ENCODE measurements at regions of chr10 and their contacts with region 1.

Region 1: DNA sequence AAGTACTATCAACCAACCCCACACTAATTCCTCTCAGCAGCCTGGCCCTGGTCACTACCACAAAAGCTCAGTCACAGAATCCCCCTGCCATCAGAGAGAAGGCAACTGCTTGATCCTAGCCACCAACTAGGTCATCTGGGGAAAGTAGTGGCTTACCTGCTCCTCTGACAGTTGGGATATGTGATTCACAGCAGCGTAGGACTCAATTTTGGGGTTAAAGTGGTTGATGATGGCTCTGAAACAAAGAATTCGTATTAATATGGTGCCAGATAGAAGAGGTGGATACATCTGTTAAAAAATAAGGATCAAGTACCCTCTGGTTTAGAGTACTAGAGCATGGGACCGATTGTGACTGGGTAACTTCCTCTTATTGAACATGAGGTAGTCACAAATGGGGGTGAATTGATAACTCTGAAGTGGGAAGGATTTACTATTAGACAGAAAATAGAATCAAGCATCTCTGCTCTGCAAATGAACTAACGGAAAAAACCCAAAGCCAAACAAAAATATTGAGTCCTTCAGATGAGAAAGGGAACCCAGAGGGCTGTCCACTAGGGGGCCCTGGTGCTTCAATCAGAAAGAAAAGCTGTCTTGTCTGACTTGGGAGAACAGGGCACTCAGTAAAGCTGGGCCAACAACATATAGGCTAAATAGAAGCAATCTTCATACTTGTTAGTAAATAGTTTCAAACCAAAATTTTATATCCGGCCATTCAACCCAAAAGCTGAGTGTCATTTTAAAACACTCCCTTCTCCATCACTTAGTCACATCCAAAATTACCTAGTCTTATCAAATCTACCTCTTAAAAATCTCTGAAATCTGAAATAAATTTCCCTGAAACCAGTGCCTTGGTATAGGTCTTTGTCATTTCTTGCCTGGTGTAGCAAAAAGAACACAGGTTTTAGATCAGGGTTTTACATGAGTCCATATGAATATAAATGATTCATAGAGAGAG is 45.9 kb upstream of the KCNIP2 start:
- DNase-seq: peak; percentile 43 to 85
- H3K4me3 ChIP-seq: no peak overlapping the region
- H3K27ac ChIP-seq: no peak overlapping the region
- H3K4me1 ChIP-seq: no peaks in the 10 kb centered on the region
- H3K27me3 ChIP-seq: no peaks in the 10 kb centered on the region
- CTCF ChIP-seq: peak; percentile 26 to 90 (median 81)
- EP300 ChIP-seq: no peak
- POLR2A ChIP-seq: no peak
- RAD21 ChIP-seq: peak; percentile 86 to 94

Region 2: DNA sequence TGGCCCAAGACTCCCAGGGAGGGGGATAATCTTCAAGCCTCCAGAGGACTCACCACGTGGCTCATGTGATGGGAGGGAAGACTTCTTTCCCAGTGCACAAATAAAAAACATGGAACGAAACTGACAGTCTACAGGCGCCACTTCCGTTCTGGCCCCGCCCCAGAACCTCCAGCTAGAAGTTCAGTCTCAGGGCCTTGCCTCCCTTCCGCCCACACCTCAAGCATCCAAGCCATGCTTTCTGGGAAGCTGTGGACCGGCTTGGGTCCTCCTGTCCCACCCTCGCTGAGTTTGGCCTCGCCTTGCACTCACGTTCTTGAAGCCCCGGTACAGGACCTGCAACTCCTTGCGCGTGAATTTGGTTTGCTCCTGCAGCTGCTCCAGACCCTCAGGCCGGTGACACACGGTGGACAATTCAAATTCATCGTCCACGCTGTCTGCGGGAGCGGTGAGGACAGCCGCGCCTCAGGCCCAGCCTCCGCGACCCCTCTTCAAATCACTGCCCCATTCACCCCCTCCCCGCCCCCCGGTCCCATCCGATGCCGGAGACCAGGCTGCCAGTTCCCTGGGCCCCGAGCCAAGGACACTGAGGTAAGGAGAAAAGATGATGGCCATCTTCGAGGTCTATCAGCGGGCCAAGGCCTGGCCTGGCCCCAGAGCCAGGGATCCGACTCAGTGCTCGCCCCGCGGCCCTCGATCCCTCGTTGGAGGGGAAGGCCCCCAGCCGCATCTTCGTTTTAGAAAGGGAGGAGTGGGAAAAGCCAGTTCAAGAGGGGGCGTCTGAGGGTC is 60.6 kb before region 1 on chr10:
- CTCF ChIA-PET with region 1: no interaction called
- POLR2A ChIA-PET with region 1: no interaction called
- DNase-seq: no peak
- H3K4me3 ChIP-seq: peak overlapping the region in 3 of 4 experiments; percentile 30 to 55 (median 36); a peak in 5 of 8 replicates
- H3K27ac ChIP-seq: no peak overlapping the region
- H3K4me1 ChIP-seq: peaks cover 7 to 21% (median 15%) of the 10 kb centered on the region in 4 experiments
- H3K27me3 ChIP-seq: no peaks in the 10 kb centered on the region
- CTCF ChIP-seq: no peak
- EP300 ChIP-seq: no peak
- POLR2A ChIP-seq: no peak
- RAD21 ChIP-seq: no peak

Region 3: DNA sequence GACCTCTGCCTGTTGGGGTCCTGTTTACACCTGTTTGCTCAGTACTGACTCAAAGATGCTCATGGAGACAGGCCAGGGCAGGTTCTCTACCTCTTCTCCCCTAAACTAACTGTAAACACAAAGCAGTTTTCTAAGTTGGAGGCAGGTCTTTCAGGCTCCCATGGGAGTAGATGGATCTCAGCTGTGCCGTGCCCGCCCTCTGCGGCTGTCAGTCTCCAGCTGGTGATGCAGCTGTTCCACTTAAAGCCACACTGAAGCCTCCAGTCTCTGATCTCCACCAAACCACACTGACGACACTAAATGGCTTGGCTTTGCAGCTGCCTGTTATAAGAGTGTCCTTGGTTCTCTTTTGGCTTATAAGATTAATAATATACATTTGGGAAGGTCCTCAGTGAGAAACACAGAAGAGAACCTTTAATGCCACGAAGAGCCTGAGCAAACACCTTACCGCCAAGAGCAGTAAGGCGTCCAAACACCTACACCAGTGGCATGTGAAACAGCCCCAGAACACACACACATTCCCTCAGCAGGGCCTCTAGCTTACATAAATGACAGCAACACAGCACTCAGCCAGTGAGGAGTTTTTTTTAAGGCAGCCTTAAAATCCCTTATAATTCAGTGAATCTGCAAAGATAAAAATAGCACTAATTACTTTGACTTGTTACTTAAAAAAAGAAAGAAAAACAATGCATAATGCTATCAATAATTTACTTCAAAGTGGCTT is 14.5 kb after region 1 on chr10:
- CTCF ChIA-PET with region 1: interaction called, 16 read pairs
- POLR2A ChIA-PET with region 1: interaction called, 3 read pairs
- DNase-seq: no peak
- H3K4me3 ChIP-seq: no peak overlapping the region
- H3K27ac ChIP-seq: no peak overlapping the region
- H3K4me1 ChIP-seq: peaks cover 6 to 28% (median 18%) of the 10 kb centered on the region in 4 experiments; a peak in 6 of 7 replicates
- H3K27me3 ChIP-seq: no peaks in the 10 kb centered on the region; a peak in 1 of 7 replicates
- CTCF ChIP-seq: no peak
- EP300 ChIP-seq: no peak
- POLR2A ChIP-seq: no peak
- RAD21 ChIP-seq: no peak

Region 4: GRCh38 chr10:101912561-101913179 is 23.1 kb after region 1 on chr10:
- CTCF ChIA-PET with region 1: interaction called, 13 read pairs
- POLR2A ChIA-PET with region 1: no interaction called
- DNase-seq: no peak
- H3K4me3 ChIP-seq: no peak overlapping the region
- H3K27ac ChIP-seq: no peak overlapping the region
- H3K4me1 ChIP-seq: no peaks in the 10 kb centered on the region
- H3K27me3 ChIP-seq: no peaks in the 10 kb centered on the region
- CTCF ChIP-seq: no peak
- EP300 ChIP-seq: no peak
- POLR2A ChIP-seq: no peak
- RAD21 ChIP-seq: no peak

Region 5: GRCh38 chr10:101941871-101942270 is 52.3 kb after region 1 on chr10:
- CTCF ChIA-PET with region 1: interaction called, 10 read pairs
- POLR2A ChIA-PET with region 1: no interaction called
- DNase-seq: no peak
- H3K4me3 ChIP-seq: no peak overlapping the region
- H3K27ac ChIP-seq: no peak overlapping the region
- H3K4me1 ChIP-seq: no peaks in the 10 kb centered on the region
- H3K27me3 ChIP-seq: no peaks in the 10 kb centered on the region
- CTCF ChIP-seq: no peak
- EP300 ChIP-seq: no peak
- POLR2A ChIP-seq: no peak
- RAD21 ChIP-seq: no peak

Region 6: GRCh38 chr10:101956117-101956516 is 66.6 kb after region 1 on chr10:
- CTCF ChIA-PET with region 1: interaction called, 10 read pairs
- POLR2A ChIA-PET with region 1: no interaction called
- DNase-seq: no peak
- H3K4me3 ChIP-seq: no peak overlapping the region
- H3K27ac ChIP-seq: no peak overlapping the region
- H3K4me1 ChIP-seq: no peaks in the 10 kb centered on the region
- H3K27me3 ChIP-seq: no peaks in the 10 kb centered on the region
- CTCF ChIP-seq: no peak
- EP300 ChIP-seq: no peak
- POLR2A ChIP-seq: no peak
- RAD21 ChIP-seq: no peak

Region 7: GRCh38 chr10:101968940-101969321 is 79.4 kb after region 1 on chr10:
- CTCF ChIA-PET with region 1: interaction called, 20 read pairs
- POLR2A ChIA-PET with region 1: no interaction called
- DNase-seq: no peak
- H3K4me3 ChIP-seq: no peak overlapping the region
- H3K27ac ChIP-seq: no peak overlapping the region
- H3K4me1 ChIP-seq: peaks cover 0 to 2% (median 0%) of the 10 kb centered on the region in 4 experiments; a peak in 1 of 7 replicates
- H3K27me3 ChIP-seq: no peaks in the 10 kb centered on the region
- CTCF ChIP-seq: no peak
- EP300 ChIP-seq: no peak
- POLR2A ChIP-seq: no peak
- RAD21 ChIP-seq: no peak

Region 8: GRCh38 chr10:102016416-102016815 is 126.9 kb after region 1 on chr10:
- CTCF ChIA-PET with region 1: interaction called, 210 read pairs
- POLR2A ChIA-PET with region 1: no interaction called
- DNase-seq: no peak
- H3K4me3 ChIP-seq: no peak overlapping the region
- H3K27ac ChIP-seq: no peak overlapping the region
- H3K4me1 ChIP-seq: no peaks in the 10 kb centered on the region; a peak in 1 of 7 replicates
- H3K27me3 ChIP-seq: no peaks in the 10 kb centered on the region
- CTCF ChIP-seq: no peak
- EP300 ChIP-seq: no peak
- POLR2A ChIP-seq: no peak
- RAD21 ChIP-seq: no peak

Measured in H1 (cell line).